Prostate gland (tissue), 2 donors: ENCODE measurements at regions of chr5 and their contacts with region 1.

Region 1: GRCh38 chr5:150461231-150461630 is 11.7 kb upstream of the RPS14 start:
- DNase-seq: no peak
- H3K4me3 ChIP-seq: no peak overlapping the region
- H3K27ac ChIP-seq: no peak overlapping the region
- H3K4me1 ChIP-seq: no peaks in the 10 kb centered on the region
- H3K27me3 ChIP-seq: no peaks in the 10 kb centered on the region
- CTCF ChIP-seq: no peak
- POLR2A ChIP-seq: no peak

Region 2: DNA sequence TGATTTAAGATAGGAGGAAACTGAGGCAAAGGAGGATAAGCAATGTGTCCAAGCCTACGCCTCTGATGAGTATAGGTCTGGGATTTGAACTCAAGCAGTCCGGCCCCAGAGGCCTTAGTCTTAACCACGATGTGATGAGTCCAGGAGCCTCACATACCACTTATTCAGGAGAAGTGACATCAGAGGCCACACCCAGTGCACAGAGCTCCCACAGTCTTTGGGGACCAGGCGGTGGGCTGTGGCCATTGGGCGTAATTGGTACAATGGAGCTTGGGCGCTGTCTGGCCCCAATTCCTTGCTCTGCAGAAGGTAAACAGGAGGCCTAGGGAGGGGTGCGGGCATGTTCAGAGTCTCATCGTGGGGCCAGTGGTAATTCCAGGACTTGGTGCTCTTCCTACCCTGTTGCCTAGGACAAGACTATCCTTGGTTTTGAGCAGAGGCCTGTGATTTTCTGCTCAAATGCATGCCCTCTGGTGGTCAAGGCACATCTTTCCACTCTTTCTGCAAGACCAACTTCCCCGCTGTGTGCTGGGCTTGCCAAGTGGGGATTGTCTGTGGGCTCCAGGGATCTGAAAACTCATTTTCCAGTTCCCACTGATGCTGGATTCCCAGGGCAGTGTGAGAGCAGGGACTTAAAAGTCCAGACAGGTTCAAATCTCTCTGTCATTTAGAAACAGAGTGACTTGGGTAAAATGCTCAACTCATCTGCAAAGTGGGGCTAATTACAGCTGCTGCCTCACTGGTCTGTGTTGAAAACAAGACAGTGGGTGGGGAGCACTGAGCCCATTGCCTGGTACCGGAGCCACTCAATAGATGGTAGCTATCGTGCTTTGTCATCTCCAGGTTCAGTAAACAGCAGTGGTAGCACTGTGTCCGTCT is 62.5 kb after region 1 on chr5:
- intact Hi-C with region 1: loop called (anchors 5 kb)
- DNase-seq: peak; percentile 51
- H3K4me3 ChIP-seq: no peak overlapping the region
- H3K27ac ChIP-seq: no peak overlapping the region
- H3K4me1 ChIP-seq: peaks cover 3% of the 10 kb centered on the region
- H3K27me3 ChIP-seq: no peaks in the 10 kb centered on the region
- CTCF ChIP-seq: peak; percentile 42 to 66 (median 60)
- POLR2A ChIP-seq: no peak

Region 3: DNA sequence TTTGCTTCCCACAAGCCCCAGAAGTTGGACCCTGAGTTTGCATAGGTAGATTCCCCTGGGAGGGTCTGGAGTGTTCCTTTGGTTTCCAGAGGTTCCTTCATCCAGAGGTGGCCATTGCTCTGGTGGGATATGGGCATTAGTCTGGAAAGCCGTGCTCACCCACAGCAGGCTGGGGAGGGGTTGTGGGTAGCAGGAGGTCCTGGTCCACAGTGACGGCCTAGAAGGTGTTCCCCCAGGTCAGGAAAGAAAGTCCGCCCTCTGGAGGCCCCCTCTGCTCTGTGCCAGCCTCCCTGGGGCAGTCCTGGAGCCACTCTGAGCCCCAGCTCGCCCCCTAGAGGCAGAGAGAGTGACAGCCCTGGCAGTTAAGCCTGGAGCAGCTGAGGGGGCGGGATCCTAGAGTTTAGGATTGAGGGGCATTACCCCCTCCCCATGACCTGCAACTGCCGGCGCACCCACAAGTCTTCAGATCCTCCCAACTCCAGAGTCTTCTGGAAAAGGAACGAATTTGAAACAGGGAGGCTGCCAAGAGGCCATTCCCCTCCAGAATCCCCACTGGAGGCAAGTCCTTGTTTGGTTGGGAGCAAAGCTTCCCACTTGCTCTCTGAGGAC is 83.5 kb after region 1 on chr5:
- intact Hi-C with region 1: loop called (anchors 5 kb)
- DNase-seq: peak; percentile 56
- H3K4me3 ChIP-seq: no peak overlapping the region
- H3K27ac ChIP-seq: no peak overlapping the region
- H3K4me1 ChIP-seq: peaks cover 4% of the 10 kb centered on the region
- H3K27me3 ChIP-seq: no peaks in the 10 kb centered on the region
- CTCF ChIP-seq: peak; percentile 30 to 88 (median 63)
- POLR2A ChIP-seq: no peak

Region 4: DNA sequence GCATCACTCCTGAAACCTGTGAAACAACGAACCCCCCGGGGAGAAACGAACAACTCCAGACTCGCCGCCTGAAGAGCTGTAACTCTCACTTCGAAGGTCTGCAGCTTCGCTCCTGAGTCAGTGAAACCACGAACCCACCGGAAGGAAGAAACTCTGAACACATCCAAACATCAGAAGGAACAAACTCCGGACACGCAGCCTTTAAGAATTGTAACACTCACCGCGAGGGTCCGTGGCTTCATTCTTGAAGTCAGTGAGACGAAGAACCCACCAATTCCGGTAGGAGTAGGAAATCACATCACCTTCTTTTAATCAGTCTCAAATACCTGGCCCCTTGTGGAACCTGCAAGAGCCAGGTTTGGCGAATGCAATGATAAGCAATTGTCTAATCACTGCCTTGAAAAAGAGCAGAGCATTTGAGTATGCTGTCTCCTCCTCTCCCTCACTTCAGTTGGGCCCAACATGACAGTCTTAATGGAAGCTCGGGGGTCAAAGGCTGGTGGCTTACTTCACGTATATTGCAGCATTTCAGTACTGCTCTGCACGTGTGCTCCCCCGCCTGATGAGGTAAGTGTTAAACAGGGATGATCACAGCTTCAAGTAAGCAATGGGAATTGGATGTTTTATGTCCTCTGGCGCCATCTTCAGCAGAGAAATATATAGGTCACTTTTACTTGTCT is 385.6 kb after region 1 on chr5:
- intact Hi-C with region 1: loop called (anchors 10 kb)
- DNase-seq: peak; percentile 76
- H3K4me3 ChIP-seq: no peak overlapping the region
- H3K27ac ChIP-seq: no peak overlapping the region
- H3K4me1 ChIP-seq: no peaks in the 10 kb centered on the region
- H3K27me3 ChIP-seq: no peaks in the 10 kb centered on the region
- CTCF ChIP-seq: peak; percentile 13 to 85 (median 69)
- POLR2A ChIP-seq: no peak